ENCODE measurements at regions of chr20 and their contacts with region 1.

Region 1: DNA sequence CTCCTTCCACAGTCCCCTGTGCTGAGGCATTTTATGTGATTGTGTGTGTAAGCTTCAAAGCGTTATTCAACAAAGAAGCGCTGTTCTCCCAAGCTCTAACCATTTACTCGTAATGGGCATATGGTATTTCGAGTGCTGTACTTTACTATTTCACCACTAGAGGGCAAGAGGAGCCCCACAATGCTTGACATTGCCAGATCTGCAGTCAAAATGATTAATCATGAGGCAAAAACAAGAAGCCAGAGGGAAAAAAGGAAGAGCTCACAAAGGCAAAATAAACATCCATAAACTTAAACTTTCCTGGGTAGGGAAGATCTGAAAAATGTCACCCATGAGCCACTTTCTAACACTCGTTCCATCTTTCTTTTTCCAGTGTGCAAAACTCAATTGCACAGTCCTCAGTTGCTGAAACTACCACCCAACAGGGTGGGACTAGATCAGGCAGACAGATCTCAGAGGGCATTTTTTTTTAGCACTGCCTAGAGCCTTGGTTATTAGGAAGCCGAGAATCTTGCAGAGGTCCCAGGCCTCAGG is 215.0 kb upstream of the PLCB4 start:
- DNase-seq: no peak
- ATAC-seq: peak; percentile 81

Region 2: DNA sequence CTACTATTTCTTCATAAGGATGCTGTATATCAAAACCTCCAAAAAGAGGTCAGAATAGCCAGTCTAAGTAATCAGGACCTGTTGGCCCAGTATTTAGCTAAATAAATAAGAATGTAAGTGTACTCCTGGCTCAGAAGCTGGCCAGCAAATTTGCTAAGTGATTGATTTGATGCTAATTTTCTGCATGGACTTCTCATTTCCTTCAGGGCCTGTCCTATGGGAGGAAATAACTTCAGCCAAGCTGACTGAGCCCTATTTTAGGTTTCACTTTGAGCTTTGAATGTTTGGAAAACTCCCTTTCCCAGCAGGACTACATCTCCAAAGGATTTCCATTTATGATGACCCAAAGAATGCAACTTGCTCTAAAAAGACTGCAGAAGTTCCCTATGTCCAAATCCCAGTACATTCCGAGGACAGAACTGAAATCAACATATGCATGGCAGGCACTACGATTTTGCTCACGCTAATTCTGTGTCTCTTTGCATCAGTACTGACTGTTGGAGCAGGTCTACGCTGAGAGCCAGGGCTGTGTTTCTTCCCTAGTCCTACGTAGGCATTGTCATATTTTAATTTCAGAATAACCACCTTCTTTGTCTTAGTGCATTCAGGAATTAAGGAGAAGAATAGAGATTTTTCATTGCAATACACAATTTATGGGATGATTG is 226.4 kb before region 1 on chr20:
- intact Hi-C with region 1: no loop called
- DNase-seq: no peak
- ATAC-seq: peak; percentile 44

Region 3: DNA sequence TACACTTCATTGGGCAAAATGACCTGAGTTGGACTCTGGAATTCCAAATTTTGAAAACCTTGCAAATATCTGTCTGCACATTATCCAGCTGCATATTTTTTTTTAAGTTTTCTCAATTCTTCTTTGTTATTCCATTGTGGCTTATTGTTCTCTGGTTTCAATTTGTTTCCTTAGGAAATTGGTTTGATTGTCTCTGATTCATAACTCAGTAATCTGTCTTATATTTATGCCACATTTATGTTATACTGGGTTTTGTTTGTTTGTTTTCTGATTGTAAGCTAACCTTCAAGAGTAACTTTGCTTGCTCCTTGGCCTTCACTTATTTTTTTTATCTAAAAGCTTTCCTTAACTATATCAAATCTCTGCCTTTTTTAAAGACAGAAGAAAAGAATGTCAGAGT is 21.7 kb after region 1 on chr20:
- intact Hi-C with region 1: no loop called
- DNase-seq: no peak
- ATAC-seq: no peak

Region 4: DNA sequence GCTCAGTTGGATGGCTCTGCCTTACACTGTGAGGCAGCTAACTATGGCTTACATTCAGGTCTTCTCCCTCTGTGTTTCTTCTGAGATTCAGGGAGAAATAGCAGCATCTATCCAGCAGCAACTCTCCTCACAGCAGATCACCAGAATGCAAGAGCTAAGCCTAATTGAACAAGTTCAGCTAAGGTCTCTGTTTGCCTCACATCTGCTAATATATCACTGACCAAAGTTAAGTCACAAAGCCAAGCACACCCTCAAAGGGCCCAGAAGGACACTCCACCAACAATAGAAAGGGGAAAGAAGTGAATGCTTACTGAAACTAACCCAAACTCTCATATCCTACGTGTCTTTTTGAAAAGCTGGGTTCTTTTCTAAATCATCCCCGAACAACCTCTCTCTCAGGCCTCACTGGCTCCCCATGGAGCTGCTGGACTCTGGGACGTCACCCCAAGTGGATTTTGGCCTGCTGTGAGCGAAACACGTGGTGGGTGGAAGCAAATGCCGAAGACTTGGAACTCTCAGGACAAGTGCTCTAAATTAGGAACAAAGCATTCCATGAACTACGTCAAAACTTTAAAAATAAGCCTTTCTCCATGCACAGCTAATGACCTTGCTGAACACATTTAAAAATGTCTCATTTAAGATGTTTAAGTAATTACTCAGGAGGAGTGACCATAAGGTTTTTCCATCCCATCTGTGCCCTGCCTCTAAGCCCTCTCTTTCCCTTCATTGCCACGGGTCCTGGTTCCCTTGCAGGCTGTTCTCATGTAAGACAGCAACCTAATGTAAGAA is 47.6 kb after region 1 on chr20:
- intact Hi-C with region 1: loop called (anchors 2 kb)
- DNase-seq: peak; percentile 70
- ATAC-seq: peak; percentile 83

Region 5: GRCh38 chr20:8976303-8976702 is 122.4 kb after region 1 on chr20:
- intact Hi-C with region 1: loop called (anchors 10 kb)
- DNase-seq: no peak
- ATAC-seq: no peak

Region 6: DNA sequence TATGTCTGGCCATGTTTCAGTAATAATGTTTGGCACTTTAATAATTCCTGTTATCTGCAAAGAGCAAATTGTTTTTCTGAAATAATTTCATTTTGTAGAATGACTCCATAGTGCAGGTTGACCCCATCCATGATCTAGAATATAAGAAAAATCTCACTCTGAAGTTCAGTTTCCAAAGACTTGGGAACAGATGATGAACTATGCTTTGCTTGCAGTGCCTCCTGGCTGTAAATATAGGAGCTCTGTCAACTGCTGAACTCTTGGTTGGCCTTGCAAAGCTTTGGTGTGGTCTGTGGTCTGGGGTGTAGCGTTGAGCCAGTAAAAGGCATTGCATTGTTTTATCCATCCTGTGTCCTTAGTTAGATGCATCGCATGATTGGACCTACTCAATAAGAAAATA is 319.0 kb after region 1 on chr20:
- intact Hi-C with region 1: loop called (anchors 10 kb)
- DNase-seq: no peak
- ATAC-seq: peak; percentile 34